HepG2 (cell line): ENCODE measurements at regions of chr9 and their contacts with region 1.

Region 1: GRCh38 chr9:104747558-104748358 is at the start of gene NIPSNAP3A:
- DNase-seq: peak; percentile 54
- ATAC-seq: peak; percentile 94
- H3K4me3 ChIP-seq: peak within 1 kb of the TSS; percentile 71 to 90 (median 89)
- H3K27ac ChIP-seq: peak within 1 kb of the TSS; percentile 54
- H3K4me1 ChIP-seq: peaks cover 19% of the 10 kb centered on the region
- H3K27me3 ChIP-seq: no peaks in the 10 kb centered on the region
- CTCF ChIP-seq: peak; percentile 18; the same call in 1 of the 2 replicates
- EP300 ChIP-seq: no peak
- POLR2A ChIP-seq: peak; percentile 46 to 73; a peak in 3 of 4 replicates
- RAD21 ChIP-seq: 0 out of 2 replicates have a peak, but pooled peaks have one; percentile 11
- total RNA-seq, gene NIPSNAP3A: 14.6 and 23.8 TPM in 2 replicates

Region 2: DNA sequence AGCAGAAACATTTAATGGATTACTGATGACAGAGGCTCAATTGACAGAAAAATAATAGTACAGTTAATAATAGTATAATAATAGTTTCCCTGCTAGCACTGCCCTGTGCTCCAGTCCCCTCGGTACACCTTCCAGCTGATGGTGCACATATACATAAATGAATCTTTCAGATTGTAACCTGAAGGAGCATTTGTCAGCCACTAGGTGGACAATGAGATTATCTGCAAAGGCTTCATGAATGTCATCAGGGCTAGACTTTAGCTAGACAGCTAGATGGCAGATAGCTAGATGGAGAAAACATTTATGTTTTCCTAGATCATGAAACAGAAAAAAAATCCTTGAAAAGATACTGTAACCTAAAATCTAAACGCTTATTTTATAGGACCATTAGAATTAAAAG is 958.1 kb before region 1 on chr9:
- CTCF ChIA-PET with region 1: no interaction called
- POLR2A ChIA-PET with region 1: no interaction called
- in situ Hi-C with region 1: no loop called
- intact Hi-C with region 1: loop called (anchors 5 kb)
- DNase-seq: peak; percentile 16
- ATAC-seq: peak; percentile 82
- H3K4me3 ChIP-seq: no peak overlapping the region
- H3K27ac ChIP-seq: no peak overlapping the region
- H3K4me1 ChIP-seq: no peaks in the 10 kb centered on the region
- H3K27me3 ChIP-seq: no peaks in the 10 kb centered on the region
- CTCF ChIP-seq: peak; percentile 31; the same call in 1 of the 2 replicates
- EP300 ChIP-seq: no peak
- POLR2A ChIP-seq: no peak
- RAD21 ChIP-seq: no peak

Region 3: DNA sequence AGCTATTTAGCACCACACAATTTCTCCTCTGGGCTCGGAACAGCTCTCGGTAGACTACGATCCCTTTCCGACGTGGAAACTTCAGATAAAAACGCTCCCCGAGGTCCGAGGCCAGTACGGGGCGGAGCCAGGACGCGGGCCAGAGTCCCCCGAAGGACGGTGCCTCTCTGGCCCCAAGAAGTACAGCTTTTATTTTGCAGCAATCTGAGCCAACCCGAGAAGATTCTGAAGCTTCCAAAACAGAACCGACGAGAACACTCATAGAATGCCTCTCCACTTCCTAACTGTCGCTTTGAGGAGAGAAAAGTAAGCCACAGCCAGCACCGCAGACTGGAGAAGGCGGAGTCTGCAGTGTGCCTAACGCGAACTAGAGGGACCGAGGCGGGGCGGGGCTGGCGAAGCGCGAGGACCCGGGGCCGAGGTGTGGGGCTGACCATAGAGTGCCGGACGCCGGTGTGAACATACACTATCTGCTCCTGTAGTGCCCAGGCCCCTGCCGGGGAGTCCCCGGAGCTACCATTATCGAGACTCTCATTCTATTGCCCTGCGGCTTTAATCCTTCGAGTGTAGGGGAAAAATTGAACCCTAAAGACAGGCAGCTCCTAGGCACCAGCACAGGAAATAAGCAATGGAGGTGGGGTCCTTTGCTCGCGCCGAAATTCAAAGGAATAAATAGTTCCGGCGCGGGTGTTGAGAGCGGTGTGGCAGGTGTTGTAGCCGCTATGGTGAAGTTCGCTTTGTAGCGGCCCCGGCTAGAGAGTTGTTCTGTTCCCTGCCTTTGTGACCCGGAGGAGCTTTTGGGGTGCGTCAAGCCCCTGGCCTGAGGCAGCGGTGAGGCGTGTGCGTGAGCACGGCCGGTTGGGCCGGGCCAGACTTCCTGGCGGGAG is 653.9 kb before region 1 on chr9 and contains the start of gene SMC2:
- CTCF ChIA-PET with region 1: no interaction called
- POLR2A ChIA-PET with region 1: no interaction called
- in situ Hi-C with region 1: no loop called
- intact Hi-C with region 1: loop called (anchors 5 kb)
- DNase-seq: peak; percentile 83
- ATAC-seq: peak; percentile 95
- H3K4me3 ChIP-seq: peak within 1 kb of the TSS; percentile 76 to 83 (median 83)
- H3K27ac ChIP-seq: peak within 1 kb of the TSS; percentile 94
- H3K4me1 ChIP-seq: peaks cover 31% of the 10 kb centered on the region
- H3K27me3 ChIP-seq: no peaks in the 10 kb centered on the region
- CTCF ChIP-seq: no peak
- EP300 ChIP-seq: no peak
- POLR2A ChIP-seq: peak; percentile 90 to 93
- RAD21 ChIP-seq: peak; percentile 36
- total RNA-seq, gene SMC2: 36.7 and 66.8 TPM in 2 replicates

Region 4: DNA sequence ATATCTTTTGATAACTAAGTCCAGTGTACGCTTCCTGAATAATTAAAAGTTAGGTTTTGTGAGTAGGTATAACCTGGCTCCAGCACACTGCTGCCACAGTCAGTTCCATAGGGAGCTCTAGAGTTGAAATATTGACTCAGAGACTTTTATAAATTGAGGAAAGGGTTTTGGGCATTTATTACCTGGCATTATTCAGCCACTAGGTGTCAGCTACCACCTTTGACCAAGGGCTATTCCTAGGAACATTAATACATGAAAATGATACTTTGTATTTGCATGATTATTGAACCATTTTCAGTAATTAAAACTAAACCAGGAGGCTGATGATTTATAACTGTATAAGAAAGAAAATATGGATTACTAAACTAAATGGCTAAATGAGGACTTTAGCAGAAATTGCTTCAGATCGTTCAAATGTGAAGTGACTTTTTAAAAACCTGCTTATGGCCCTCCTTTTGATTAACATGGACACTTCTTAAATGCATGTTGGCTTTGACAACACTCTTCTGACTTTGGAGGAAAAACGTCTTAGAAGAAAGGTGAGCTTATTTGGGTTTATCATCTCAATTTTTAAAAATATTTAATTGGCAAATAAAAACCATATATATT is 570.7 kb before region 1 on chr9:
- CTCF ChIA-PET with region 1: interaction called, 8 read pairs
- POLR2A ChIA-PET with region 1: no interaction called
- in situ Hi-C with region 1: no loop called
- intact Hi-C with region 1: loop called (anchors 1 kb)
- DNase-seq: peak; percentile 9
- ATAC-seq: peak; percentile 63; the same call in 2 of the 3 replicates
- H3K4me3 ChIP-seq: no peak overlapping the region
- H3K27ac ChIP-seq: no peak overlapping the region
- H3K4me1 ChIP-seq: no peaks in the 10 kb centered on the region
- H3K27me3 ChIP-seq: no peaks in the 10 kb centered on the region
- CTCF ChIP-seq: peak; percentile 52
- EP300 ChIP-seq: no peak
- POLR2A ChIP-seq: no peak
- RAD21 ChIP-seq: no peak

Region 5: DNA sequence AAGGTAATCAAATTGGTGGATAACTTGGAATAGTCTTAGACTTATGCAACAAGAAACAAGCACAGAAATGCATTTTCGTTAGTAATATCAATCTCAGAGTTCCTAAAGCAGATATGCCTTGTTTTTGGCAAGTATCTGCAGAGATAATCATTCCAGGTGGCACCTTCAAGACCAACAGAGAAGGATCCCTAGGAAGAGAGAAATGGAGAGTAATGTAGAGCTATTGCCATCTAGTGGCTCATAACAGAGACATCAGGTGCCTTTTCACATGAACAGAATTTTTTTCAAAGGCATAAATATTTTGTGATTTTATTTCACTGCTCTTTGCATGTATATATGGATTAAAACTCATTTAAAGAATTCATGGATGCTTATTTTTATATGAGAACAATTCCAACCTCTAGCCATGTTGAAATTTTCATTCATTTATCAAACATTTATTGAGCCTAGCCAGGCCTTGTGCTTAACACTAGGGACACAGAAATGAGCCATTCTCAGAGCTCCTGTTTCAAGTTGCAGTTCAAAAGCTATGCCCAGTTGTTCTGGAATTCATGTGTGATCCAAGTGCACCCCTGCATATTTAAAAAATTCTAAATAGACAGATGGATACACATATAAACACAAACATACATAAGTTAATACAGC is 361.2 kb before region 1 on chr9:
- CTCF ChIA-PET with region 1: no interaction called
- POLR2A ChIA-PET with region 1: no interaction called
- in situ Hi-C with region 1: no loop called
- intact Hi-C with region 1: loop called (anchors 2 kb)
- DNase-seq: peak; percentile 16
- ATAC-seq: peak; percentile 80
- H3K4me3 ChIP-seq: no peak overlapping the region
- H3K27ac ChIP-seq: no peak overlapping the region
- H3K4me1 ChIP-seq: no peaks in the 10 kb centered on the region
- H3K27me3 ChIP-seq: no peaks in the 10 kb centered on the region
- CTCF ChIP-seq: peak; percentile 69
- EP300 ChIP-seq: no peak
- POLR2A ChIP-seq: no peak
- RAD21 ChIP-seq: peak; percentile 31; the same call in 1 of the 2 replicates

Region 6: DNA sequence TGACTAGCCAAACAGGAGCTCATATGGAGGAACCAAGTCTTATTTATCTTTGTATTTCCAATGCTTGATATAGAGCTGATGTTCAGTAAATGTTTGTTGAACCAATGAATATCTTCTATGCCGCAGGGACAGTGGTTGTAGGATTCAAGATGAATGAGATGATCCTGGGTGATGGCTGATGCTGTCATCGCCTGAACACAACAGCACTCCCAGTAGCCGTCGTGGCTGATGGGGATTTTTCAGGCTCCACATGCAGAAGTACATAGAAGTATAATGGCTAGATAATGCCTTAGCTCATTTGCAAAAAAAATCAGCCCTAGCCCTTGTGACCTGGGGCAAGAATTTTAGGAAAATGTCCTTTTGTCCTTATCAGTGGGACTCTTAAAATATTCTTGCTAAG is 312.7 kb before region 1 on chr9:
- CTCF ChIA-PET with region 1: no interaction called
- POLR2A ChIA-PET with region 1: no interaction called
- in situ Hi-C with region 1: no loop called
- intact Hi-C with region 1: no loop called
- DNase-seq: no peak
- ATAC-seq: no peak
- H3K4me3 ChIP-seq: no peak overlapping the region
- H3K27ac ChIP-seq: no peak overlapping the region
- H3K4me1 ChIP-seq: no peaks in the 10 kb centered on the region
- H3K27me3 ChIP-seq: no peaks in the 10 kb centered on the region
- CTCF ChIP-seq: no peak
- EP300 ChIP-seq: no peak
- POLR2A ChIP-seq: no peak
- RAD21 ChIP-seq: no peak

Region 7: DNA sequence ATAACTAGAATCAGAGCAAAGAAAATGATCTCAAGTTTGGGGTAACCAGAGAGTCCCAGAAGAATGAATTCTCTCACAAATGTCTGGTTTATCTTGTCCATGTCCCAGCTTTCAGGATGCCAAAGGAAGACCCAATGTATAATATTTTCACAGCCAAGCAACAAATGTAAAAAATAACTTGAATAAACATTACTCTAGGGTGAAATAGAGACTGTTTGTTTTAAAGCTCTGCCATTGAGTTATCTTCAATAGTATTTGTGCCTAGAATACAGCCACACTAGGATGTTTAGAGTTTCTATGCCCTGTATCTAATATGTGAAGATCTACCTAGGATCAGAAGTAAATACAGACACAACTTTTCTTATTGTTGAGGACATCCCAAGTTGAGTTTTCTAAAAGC is 220.6 kb before region 1 on chr9 and contains the start of gene OR13C4:
- CTCF ChIA-PET with region 1: no interaction called
- POLR2A ChIA-PET with region 1: no interaction called
- in situ Hi-C with region 1: no loop called
- intact Hi-C with region 1: no loop called
- DNase-seq: no peak
- ATAC-seq: no peak
- H3K4me3 ChIP-seq: no peak within 1 kb of the TSS
- H3K27ac ChIP-seq: no peak within 1 kb of the TSS
- H3K4me1 ChIP-seq: no peaks in the 10 kb centered on the region
- H3K27me3 ChIP-seq: peaks cover 0 to 1% of the 10 kb centered on the region in 2 experiments; a peak in 1 of 5 replicates
- CTCF ChIP-seq: no peak
- EP300 ChIP-seq: no peak
- POLR2A ChIP-seq: no peak
- RAD21 ChIP-seq: no peak
- total RNA-seq, gene OR13C4: not detected in 2 replicates

Region 8: GRCh38 chr9:104682642-104683041 is 65.1 kb before region 1 on chr9:
- CTCF ChIA-PET with region 1: no interaction called
- POLR2A ChIA-PET with region 1: no interaction called
- in situ Hi-C with region 1: no loop called
- intact Hi-C with region 1: loop called (anchors 1 kb)
- DNase-seq: peak; percentile 57
- ATAC-seq: peak; percentile 72
- H3K4me3 ChIP-seq: no peak overlapping the region
- H3K27ac ChIP-seq: no peak overlapping the region
- H3K4me1 ChIP-seq: no peaks in the 10 kb centered on the region
- H3K27me3 ChIP-seq: no peaks in the 10 kb centered on the region
- CTCF ChIP-seq: peak; percentile 65
- EP300 ChIP-seq: no peak
- POLR2A ChIP-seq: no peak
- RAD21 ChIP-seq: no peak

Region 9: DNA sequence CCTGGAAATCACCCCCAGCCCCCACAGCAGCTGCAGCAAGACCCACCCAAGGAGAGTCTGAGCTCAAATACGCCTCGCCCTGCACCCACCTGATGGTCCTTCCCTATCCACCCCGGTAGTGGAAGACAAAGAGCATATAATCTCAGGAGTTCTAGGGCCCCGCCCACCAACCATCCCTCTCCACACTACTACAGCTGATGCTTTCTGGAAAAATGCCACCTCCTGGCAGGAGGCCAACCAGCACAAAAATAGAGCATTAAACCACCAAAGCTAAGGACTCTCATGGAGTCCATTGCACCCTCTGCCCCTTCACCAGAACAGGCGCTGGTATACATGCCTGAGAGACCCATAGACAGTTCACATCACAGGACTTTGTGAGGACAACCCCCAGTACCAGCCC is 22.7 kb before region 1 on chr9:
- CTCF ChIA-PET with region 1: no interaction called
- POLR2A ChIA-PET with region 1: no interaction called
- in situ Hi-C with region 1: no loop called
- intact Hi-C with region 1: no loop called
- DNase-seq: no peak
- ATAC-seq: no peak
- H3K4me3 ChIP-seq: no peak overlapping the region
- H3K27ac ChIP-seq: no peak overlapping the region
- H3K4me1 ChIP-seq: no peaks in the 10 kb centered on the region
- H3K27me3 ChIP-seq: no peaks in the 10 kb centered on the region
- CTCF ChIP-seq: no peak
- EP300 ChIP-seq: no peak
- POLR2A ChIP-seq: no peak
- RAD21 ChIP-seq: no peak